Transverse colon (tissue), 4 donors: ENCODE measurements at regions of chr6 and their contacts with region 1.

Region 1: GRCh38 chr6:130836055-130836640 is 8.9 kb downstream of the SMLR1 start:
- DNase-seq: no peak
- H3K4me3 ChIP-seq: no peak overlapping the region
- H3K27ac ChIP-seq: no peak overlapping the region
- H3K4me1 ChIP-seq: peaks cover 0 to 4% (median 0%) of the 10 kb centered on the region in 4 donors
- H3K27me3 ChIP-seq: no peaks in the 10 kb centered on the region
- CTCF ChIP-seq: no peak
- EP300 ChIP-seq: no peak
- POLR2A ChIP-seq: no peak

Region 2: DNA sequence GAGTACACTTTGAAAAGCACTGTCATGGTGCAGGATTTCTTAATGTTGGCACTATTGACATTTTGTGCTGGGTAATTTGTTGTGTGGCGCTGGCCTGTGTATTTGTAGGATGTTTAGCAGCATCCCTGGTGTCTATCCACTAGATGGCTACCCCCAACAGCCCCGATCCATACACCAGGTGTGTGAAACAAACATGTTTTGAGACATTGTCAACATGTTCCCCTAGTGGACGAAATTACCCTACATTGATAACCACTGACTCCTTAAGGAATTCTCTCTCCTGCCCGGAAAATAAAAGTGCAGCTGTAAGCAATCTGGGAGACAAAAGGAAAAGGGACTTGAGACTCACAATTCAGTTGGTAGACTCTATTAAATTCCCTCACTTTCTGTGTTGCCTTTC is 522.9 kb before region 1 on chr6:
- in situ Hi-C with region 1: loop called in 1 of 4 experiments (anchors 10 kb)
- intact Hi-C with region 1: no loop called
- DNase-seq: no peak
- H3K4me3 ChIP-seq: no peak overlapping the region
- H3K27ac ChIP-seq: no peak overlapping the region
- H3K4me1 ChIP-seq: no peaks in the 10 kb centered on the region
- H3K27me3 ChIP-seq: no peaks in the 10 kb centered on the region
- CTCF ChIP-seq: no peak
- EP300 ChIP-seq: no peak
- POLR2A ChIP-seq: no peak

Region 3: GRCh38 chr6:130743175-130743574 is 93.0 kb before region 1 on chr6:
- in situ Hi-C with region 1: no loop called
- intact Hi-C with region 1: no loop called
- DNase-seq: no peak
- H3K4me3 ChIP-seq: no peak overlapping the region
- H3K27ac ChIP-seq: no peak overlapping the region
- H3K4me1 ChIP-seq: no peaks in the 10 kb centered on the region
- H3K27me3 ChIP-seq: no peaks in the 10 kb centered on the region
- CTCF ChIP-seq: no peak
- EP300 ChIP-seq: no peak
- POLR2A ChIP-seq: no peak

Region 4: DNA sequence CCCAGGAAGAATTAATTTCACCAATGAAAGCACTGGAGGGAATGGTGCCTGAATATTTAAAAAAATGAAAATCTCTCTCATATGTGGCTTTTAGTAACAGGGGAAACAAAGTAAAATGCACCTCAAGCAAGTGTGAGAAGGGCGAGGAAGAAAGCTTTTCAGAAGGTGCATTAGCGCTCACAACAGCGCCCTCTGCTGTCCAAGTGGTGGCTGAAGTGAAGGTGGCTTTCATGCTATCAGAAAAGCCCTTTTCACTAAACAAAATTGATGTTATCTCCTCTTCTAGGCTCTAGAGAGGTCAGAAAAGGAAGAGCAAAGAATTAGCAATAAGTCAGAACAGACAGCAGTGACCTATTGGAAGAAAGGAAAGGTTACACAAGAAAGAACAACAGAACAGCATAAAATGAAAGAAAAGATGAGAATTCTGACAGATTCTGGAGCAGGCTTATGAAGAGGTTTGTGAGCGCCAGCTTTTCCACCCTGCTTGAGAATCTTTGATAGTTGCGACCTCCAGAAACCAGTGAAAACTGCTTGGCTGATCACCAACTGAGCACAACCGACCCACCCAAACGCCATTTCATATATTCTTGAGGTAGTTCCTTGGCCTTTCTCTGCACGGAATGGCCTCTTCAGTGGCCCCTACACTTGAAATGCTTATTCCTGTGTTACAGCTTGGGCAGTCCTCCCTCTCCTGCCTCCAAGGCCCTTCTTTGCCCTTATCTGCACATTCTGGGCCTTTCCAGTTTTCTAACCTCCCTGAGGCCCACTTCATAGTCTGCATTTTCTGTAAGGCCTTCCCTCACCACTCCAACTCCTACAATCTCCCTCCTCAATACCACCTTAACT is 36.3 kb after region 1 on chr6:
- in situ Hi-C with region 1: no loop called
- intact Hi-C with region 1: no loop called
- DNase-seq: peak; percentile 78
- H3K4me3 ChIP-seq: no peak overlapping the region
- H3K27ac ChIP-seq: no peak overlapping the region
- H3K4me1 ChIP-seq: no peaks in the 10 kb centered on the region
- H3K27me3 ChIP-seq: no peaks in the 10 kb centered on the region
- CTCF ChIP-seq: peak; percentile 65 to 92 (median 86)
- EP300 ChIP-seq: no peak
- POLR2A ChIP-seq: no peak

Region 5: DNA sequence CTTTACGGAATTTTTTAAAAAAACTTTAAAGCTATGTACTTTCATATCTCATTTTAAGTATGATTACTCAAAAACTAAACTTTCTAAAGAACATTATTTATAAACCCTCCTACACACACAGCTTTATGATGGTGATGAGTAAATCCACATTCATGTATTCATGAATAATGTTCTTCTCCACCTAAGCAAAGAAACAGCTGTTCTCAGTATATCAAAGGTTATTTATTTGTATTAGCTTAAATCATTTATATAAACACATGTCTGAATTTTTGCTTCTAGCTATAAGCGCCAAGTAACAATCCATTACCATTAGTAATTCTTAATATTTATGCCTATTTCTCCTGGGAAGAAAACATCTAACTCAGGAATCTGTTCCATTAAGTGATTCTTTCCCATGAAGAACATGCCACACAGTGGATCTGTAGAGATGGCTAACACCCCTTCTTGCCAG is 54.4 kb after region 1 on chr6:
- in situ Hi-C with region 1: no loop called
- intact Hi-C with region 1: no loop called
- DNase-seq: no peak
- H3K4me3 ChIP-seq: no peak overlapping the region
- H3K27ac ChIP-seq: peak overlapping the region in 2 of 4 donors; percentile 1 to 29
- H3K4me1 ChIP-seq: peaks cover 0 to 4% (median 2%) of the 10 kb centered on the region in 4 donors
- H3K27me3 ChIP-seq: no peaks in the 10 kb centered on the region
- CTCF ChIP-seq: no peak
- EP300 ChIP-seq: no peak
- POLR2A ChIP-seq: no peak

Region 6: GRCh38 chr6:130933712-130934200 is 97.6 kb after region 1 on chr6:
- in situ Hi-C with region 1: no loop called
- intact Hi-C with region 1: no loop called
- DNase-seq: no peak
- H3K4me3 ChIP-seq: no peak overlapping the region
- H3K27ac ChIP-seq: peak overlapping the region in 1 of 4 donors; percentile 4
- H3K4me1 ChIP-seq: peaks cover 0 to 54% (median 23%) of the 10 kb centered on the region in 4 donors
- H3K27me3 ChIP-seq: no peaks in the 10 kb centered on the region
- CTCF ChIP-seq: no peak
- EP300 ChIP-seq: no peak
- POLR2A ChIP-seq: no peak